Adrenal gland (tissue), 19 donors: ENCODE measurements at regions of chr1 and their contacts with region 1.

Region 1: DNA sequence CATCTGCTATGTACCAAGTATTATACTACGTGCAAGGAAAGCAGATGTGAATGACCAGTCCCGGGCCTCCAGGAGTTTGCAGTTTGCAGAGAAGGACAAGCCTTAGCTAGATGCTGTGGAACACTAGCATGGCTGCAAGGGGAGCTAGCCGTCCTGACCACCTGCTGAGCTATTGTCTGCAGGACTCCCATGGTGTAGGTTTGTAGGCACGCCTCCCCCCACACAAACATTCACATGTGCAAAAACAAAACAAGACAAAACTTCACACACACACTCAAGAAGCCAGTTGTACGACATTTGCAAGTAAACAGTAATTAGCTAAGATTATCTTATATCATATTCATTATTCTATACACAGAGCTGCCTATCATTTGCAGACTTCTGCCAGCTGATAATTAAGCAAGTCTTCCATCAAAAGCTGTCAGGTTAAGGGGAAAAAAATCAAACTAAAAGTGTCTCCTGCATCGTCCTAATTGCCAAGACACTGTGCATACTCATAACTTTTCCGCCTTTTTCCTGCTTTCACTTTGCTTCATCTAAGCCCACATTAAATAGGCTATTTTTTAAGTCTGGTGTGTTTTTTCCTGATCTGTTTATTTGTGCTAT is 10.7 kb upstream of the HNRNPU start:
- DNase-seq: no peak
- H3K4me3 ChIP-seq: no peak overlapping the region
- H3K27ac ChIP-seq: no peak overlapping the region
- H3K4me1 ChIP-seq: no peaks in the 10 kb centered on the region
- H3K27me3 ChIP-seq: no peaks in the 10 kb centered on the region
- CTCF ChIP-seq: no peak
- POLR2A ChIP-seq: no peak

Region 2: GRCh38 chr1:244952940-244953339 is 77.9 kb after region 1 on chr1:
- intact Hi-C with region 1: loop called in 1 of 2 experiments (anchors 10 kb)
- DNase-seq: no peak
- H3K4me3 ChIP-seq: no peak overlapping the region
- H3K27ac ChIP-seq: no peak overlapping the region
- H3K4me1 ChIP-seq: no peaks in the 10 kb centered on the region
- H3K27me3 ChIP-seq: no peaks in the 10 kb centered on the region
- CTCF ChIP-seq: no peak
- POLR2A ChIP-seq: no peak

Region 3: GRCh38 chr1:244980605-244981004 is 105.5 kb after region 1 on chr1:
- intact Hi-C with region 1: no loop called
- DNase-seq: no peak
- H3K4me3 ChIP-seq: no peak overlapping the region
- H3K27ac ChIP-seq: no peak overlapping the region
- H3K4me1 ChIP-seq: no peaks in the 10 kb centered on the region
- H3K27me3 ChIP-seq: no peaks in the 10 kb centered on the region
- CTCF ChIP-seq: no peak
- POLR2A ChIP-seq: no peak

Region 4: GRCh38 chr1:245248231-245248731 is 373.2 kb after region 1 on chr1:
- intact Hi-C with region 1: no loop called
- DNase-seq: peak in 1 of 7 donors; percentile 8
- H3K4me3 ChIP-seq: no peak overlapping the region
- H3K27ac ChIP-seq: peak overlapping the region in 1 of 5 donors; percentile 34
- H3K4me1 ChIP-seq: no peaks in the 10 kb centered on the region
- H3K27me3 ChIP-seq: no peaks in the 10 kb centered on the region
- CTCF ChIP-seq: no peak
- POLR2A ChIP-seq: no peak